Activated naive CD4-positive, alpha-beta T cell treated with anti-CD3 and anti-CD28 coated beads for 36 hours (primary cell): ENCODE measurements at regions of chr12 and their contacts with region 1.

Region 1: GRCh38 chr12:751192-751998 is 984 bp upstream of the WNK1 start:
- DNase-seq: peak; percentile 94
- H3K4me3 Mint-ChIP-seq: no peak overlapping the region
- H3K27ac Mint-ChIP-seq: no peak overlapping the region
- H3K4me1 Mint-ChIP-seq: peaks cover 23% of the 10 kb centered on the region
- H3K27me3 Mint-ChIP-seq: no peaks in the 10 kb centered on the region

Region 2: GRCh38 chr12:614411-614970 is 136.9 kb before region 1 on chr12:
- CTCF ChIA-PET with region 1: interaction called, 58 read pairs
- intact Hi-C with region 1: loop called (anchors 1 kb)
- DNase-seq: peak; percentile 72
- H3K4me3 Mint-ChIP-seq: no peak overlapping the region
- H3K27ac Mint-ChIP-seq: no peak overlapping the region
- H3K4me1 Mint-ChIP-seq: peaks cover 30% of the 10 kb centered on the region
- H3K27me3 Mint-ChIP-seq: no peaks in the 10 kb centered on the region

Region 3: DNA sequence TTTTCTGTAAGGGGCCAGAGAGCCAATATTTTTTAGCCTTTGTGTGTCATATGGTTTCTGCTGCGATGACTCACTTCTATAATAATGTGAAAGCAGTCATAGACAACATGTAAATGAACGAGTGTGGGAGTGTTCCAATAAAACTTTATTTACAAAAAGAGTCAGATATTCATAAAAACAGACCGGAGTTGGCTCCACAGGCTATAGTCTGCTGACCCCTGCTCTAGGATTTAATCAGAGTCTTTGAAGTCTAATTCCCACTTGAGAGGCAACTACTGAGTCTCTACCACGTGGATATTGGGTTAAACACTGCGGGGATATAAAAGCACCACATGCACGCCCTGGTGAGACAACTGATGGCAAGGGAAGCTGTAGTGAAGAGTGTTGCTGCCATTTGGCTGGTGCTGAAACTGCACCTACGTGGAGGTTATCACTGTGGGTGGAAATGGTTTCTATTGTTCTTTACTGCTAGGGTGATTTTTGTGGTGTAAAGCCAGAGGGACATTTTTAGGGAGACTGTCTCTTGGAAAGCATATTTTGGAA is 84.6 kb before region 1 on chr12:
- CTCF ChIA-PET with region 1: interaction called, 28 read pairs
- intact Hi-C with region 1: loop called (anchors 1 kb)
- DNase-seq: peak; percentile 47
- H3K4me3 Mint-ChIP-seq: peak overlapping the region; percentile 36
- H3K27ac Mint-ChIP-seq: peak overlapping the region; percentile 78
- H3K4me1 Mint-ChIP-seq: peaks cover 75% of the 10 kb centered on the region
- H3K27me3 Mint-ChIP-seq: no peaks in the 10 kb centered on the region

Region 4: GRCh38 chr12:724194-724855 is 27.1 kb before region 1 on chr12:
- CTCF ChIA-PET with region 1: interaction called, 28 read pairs
- intact Hi-C with region 1: loop called (anchors 1 kb)
- DNase-seq: peak; percentile 54
- H3K4me3 Mint-ChIP-seq: peak overlapping the region; percentile 14
- H3K27ac Mint-ChIP-seq: peak overlapping the region; percentile 80
- H3K4me1 Mint-ChIP-seq: peaks cover 83% of the 10 kb centered on the region
- H3K27me3 Mint-ChIP-seq: no peaks in the 10 kb centered on the region

Region 5: GRCh38 chr12:818733-819132 is 67.3 kb after region 1 on chr12:
- CTCF ChIA-PET with region 1: interaction called, 69 read pairs
- intact Hi-C with region 1: loop called (anchors 1 kb)
- DNase-seq: no peak
- H3K4me3 Mint-ChIP-seq: no peak overlapping the region
- H3K27ac Mint-ChIP-seq: no peak overlapping the region
- H3K4me1 Mint-ChIP-seq: peaks cover 42% of the 10 kb centered on the region
- H3K27me3 Mint-ChIP-seq: no peaks in the 10 kb centered on the region